Naive thymus-derived CD8-positive, alpha-beta T cell (primary cell): ENCODE measurements at regions of chr3 and their contacts with region 1.

Region 1: GRCh38 chr3:16482770-16483531 is 30.5 kb downstream of the RFTN1 start:
- DNase-seq: peak in 9 of 10 donors; percentile 18 to 70 (median 36)
- ATAC-seq: peak; percentile 84 to 85
- H3K4me3 Mint-ChIP-seq: peak overlapping the region; percentile 16 to 88 (median 72)
- H3K27ac Mint-ChIP-seq: peak overlapping the region; percentile 49 to 95 (median 90)
- H3K4me1 Mint-ChIP-seq: peaks cover 34 to 88% (median 74%) of the 10 kb centered on the region in 4 donors
- H3K27me3 Mint-ChIP-seq: no peaks in the 10 kb centered on the region

Region 2: DNA sequence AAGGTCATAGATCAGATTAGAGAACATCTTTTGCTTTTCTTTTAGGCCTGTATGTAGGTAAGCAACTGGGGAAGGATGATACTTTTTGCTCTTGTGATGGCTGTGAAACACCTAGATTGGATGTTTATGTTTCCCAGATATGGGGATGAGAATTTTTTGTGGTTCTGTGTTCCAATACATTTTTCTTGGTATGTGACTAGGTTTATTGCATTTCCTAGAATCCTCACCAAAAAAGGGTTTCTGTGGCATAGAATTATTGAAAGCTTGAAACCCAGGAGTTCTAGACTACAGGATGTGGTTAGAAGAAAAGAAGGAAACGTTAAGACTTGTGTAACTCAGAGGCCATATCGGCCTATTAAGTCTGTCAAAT is 192.1 kb before region 1 on chr3:
- POLR2A ChIA-PET with region 1: no interaction called
- DNase-seq: peak in 3 of 10 donors; percentile 65 to 69 (median 68)
- ATAC-seq: peak; percentile 15 to 32
- H3K4me3 Mint-ChIP-seq: peak overlapping the region; percentile 95 to 100 (median 97)
- H3K27ac Mint-ChIP-seq: peak overlapping the region; percentile 93 to 99 (median 96)
- H3K4me1 Mint-ChIP-seq: peaks cover 33 to 88% (median 59%) of the 10 kb centered on the region in 4 donors
- H3K27me3 Mint-ChIP-seq: no peaks in the 10 kb centered on the region

Region 3: GRCh38 chr3:16467393-16467792 is 15.6 kb before region 1 on chr3:
- POLR2A ChIA-PET with region 1: interaction called, 13 read pairs
- DNase-seq: peak in 9 of 10 donors; percentile 17 to 70 (median 57)
- ATAC-seq: peak; percentile 60 to 78
- H3K4me3 Mint-ChIP-seq: peak overlapping the region; percentile 57 to 82 (median 66)
- H3K27ac Mint-ChIP-seq: peak overlapping the region; percentile 50 to 99 (median 94)
- H3K4me1 Mint-ChIP-seq: peaks cover 46 to 75% (median 73%) of the 10 kb centered on the region in 4 donors
- H3K27me3 Mint-ChIP-seq: no peaks in the 10 kb centered on the region

Region 4: DNA sequence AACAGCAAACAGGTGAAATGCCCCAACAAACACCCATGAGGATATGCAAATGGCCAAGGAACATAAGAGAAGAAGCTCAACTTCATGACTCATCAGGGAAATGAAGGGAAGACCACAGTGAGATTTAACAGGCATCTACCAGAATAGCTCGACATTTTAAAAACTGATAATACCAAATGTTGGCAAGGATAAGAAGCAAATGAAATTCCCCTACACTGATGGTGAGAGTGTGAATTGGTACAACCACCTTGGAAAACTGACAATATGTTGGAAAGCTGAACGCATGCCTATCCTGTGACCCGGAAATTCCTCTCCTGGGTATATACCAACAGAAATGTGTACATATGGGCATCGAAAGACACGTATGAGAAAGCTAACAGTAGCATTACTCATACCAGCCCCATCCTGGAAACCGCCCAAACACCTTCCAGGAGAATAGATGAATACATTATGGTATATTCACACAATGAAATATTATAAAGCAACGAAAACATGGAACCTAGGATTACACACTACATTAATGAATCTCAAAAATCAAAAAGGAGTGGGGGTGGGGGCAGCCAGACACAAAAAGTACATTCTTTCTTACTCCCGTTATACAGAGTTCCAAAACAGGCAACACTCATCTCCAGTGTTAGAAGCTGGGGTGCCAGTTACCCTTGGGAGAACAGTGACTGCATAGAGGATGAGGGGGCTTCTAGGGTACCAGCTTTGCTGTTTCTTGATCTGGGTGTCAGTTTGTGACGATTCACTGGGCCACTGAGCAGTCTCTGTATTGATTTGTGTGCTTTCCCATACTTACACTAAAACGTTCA is 13.7 kb after region 1 on chr3:
- POLR2A ChIA-PET with region 1: interaction called, 42 read pairs
- DNase-seq: no peak
- ATAC-seq: peak; percentile 34 to 67
- H3K4me3 Mint-ChIP-seq: peak overlapping the region in 9 of 10 donors; percentile 24 to 74 (median 53)
- H3K27ac Mint-ChIP-seq: peak overlapping the region; percentile 29 to 83 (median 64)
- H3K4me1 Mint-ChIP-seq: peaks cover 40 to 67% (median 64%) of the 10 kb centered on the region in 4 donors
- H3K27me3 Mint-ChIP-seq: no peaks in the 10 kb centered on the region

Region 5: DNA sequence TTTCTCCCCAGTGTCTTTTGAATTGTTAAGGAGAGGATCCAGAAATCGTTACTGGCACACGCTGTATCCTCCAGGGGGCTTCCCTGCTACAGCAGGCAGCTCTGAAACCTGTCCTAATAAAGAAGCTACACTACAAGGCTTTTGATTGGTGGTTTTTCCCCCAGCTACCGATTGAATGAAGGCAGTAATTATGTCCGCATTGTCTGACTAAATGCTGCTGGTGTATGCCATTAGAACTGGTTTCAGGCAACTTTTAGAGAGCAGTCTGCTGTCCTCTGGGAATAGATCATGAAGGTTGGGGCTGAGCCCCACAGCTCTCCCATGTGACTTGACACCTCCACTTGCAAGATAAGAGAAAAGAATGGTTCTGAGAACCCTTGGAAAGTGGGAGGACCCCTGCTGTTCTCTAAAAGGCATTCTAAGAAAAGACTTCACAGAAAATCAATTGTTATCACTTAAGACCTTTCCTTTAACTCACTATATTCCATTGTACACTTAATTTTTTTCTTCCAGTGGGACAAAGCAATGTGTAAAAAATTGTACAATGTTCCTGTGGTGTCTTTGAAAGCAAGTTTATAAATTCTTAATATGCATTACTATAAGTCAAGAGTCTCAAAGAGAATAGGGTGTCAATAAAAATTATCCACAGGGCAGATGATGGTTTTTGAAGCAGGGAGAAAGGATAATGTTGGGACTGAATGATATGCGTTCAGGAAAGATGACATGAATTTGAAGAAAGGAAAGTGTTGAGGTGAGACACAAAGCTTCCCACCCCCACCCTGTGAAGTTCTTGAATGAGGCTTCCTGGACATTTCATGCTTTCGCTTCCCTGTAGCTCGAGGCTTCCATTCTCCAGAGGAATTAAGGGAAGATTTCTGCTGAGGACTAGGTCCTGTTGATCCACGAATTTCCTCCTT is 175.3 kb after region 1 on chr3:
- POLR2A ChIA-PET with region 1: no interaction called
- DNase-seq: no peak
- ATAC-seq: no peak
- H3K4me3 Mint-ChIP-seq: no peak overlapping the region
- H3K27ac Mint-ChIP-seq: peak overlapping the region in 1 of 10 donors; percentile 31
- H3K4me1 Mint-ChIP-seq: peaks cover 0 to 3% (median 0%) of the 10 kb centered on the region in 4 donors
- H3K27me3 Mint-ChIP-seq: peaks cover 0 to 2% (median 0%) of the 10 kb centered on the region in 5 donors